Endothelial cell of umbilical vein (primary cell): ENCODE measurements at regions of chr3 and their contacts with region 1.

Region 1: DNA sequence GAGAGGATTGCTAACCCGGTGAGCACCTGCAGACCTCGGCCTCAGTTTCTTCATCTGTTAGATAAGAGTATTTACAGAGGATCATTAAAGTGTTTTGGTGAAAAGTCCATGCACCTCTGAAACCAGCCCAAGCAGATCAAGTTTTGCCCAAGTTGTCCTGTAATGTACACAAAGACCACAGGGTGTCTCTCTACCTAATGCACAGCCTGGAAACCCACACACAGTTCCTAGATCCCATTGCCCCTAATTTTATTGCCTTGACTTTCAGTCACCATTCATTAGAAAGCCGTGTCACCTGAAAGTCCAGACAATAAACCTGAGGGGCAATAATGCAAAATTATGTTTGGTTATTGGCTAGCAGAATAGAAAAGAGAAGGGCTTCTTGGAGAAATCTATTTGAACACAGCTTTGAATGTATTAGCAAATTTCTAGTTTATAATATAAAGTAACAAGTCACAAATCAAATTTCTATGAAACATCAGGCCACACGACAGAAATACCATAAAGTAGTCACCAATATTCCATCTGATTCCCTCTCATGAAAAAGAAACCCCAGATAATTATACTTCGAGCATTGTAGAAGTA is 161.3 kb upstream of the SLC2A2 start:
- DNase-seq: peak; percentile 67
- H3K4me3 ChIP-seq: no peak overlapping the region
- H3K27ac ChIP-seq: no peak overlapping the region
- H3K4me1 ChIP-seq: peaks cover 43% of the 10 kb centered on the region
- H3K27me3 ChIP-seq: no peaks in the 10 kb centered on the region
- CTCF ChIP-seq: peak; percentile 61 to 69
- POLR2A ChIP-seq: no peak

Region 2: DNA sequence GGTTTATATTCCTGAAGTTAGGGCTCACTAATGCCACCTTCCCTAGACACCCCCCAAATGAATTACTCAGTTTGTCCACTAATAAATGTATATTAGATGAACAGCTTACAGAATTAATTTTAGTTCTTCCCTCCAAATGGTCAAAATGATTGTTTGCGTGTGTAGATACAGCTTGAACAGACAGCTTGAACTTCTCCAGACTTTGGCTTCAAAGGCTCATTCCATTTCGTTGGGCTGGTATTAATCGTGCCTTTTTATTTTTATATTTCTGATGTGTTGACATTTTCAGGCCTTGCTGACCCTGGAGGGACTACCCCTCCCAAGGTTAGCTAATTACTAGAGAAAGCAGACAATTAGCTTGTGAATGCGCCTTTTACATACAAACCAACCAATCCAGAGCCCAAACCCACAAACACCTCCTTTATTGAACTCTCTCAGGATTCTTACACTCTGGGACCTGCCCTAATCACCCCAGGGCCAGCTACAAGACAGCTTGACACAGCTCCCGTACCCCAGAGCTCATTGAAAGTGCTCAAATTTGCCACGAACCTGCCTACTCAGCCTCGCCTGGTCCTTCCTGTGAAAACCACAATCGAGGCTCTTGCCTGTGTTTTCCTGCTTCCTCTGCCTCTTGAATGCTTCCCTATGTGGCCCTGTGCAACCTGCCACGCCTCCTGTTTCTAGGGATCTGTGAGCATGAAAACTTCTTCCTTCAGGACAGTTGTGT is 358.1 kb before region 1 on chr3:
- CTCF ChIA-PET with region 1: no interaction called
- POLR2A ChIA-PET with region 1: no interaction called
- dilution Hi-C with region 1: no loop called
- intact Hi-C with region 1: no loop called
- DNase-seq: no peak
- H3K4me3 ChIP-seq: no peak overlapping the region
- H3K27ac ChIP-seq: no peak overlapping the region
- H3K4me1 ChIP-seq: no peaks in the 10 kb centered on the region
- H3K27me3 ChIP-seq: peaks cover 19 to 24% of the 10 kb centered on the region in 2 experiments
- CTCF ChIP-seq: no peak
- POLR2A ChIP-seq: no peak

Region 3: DNA sequence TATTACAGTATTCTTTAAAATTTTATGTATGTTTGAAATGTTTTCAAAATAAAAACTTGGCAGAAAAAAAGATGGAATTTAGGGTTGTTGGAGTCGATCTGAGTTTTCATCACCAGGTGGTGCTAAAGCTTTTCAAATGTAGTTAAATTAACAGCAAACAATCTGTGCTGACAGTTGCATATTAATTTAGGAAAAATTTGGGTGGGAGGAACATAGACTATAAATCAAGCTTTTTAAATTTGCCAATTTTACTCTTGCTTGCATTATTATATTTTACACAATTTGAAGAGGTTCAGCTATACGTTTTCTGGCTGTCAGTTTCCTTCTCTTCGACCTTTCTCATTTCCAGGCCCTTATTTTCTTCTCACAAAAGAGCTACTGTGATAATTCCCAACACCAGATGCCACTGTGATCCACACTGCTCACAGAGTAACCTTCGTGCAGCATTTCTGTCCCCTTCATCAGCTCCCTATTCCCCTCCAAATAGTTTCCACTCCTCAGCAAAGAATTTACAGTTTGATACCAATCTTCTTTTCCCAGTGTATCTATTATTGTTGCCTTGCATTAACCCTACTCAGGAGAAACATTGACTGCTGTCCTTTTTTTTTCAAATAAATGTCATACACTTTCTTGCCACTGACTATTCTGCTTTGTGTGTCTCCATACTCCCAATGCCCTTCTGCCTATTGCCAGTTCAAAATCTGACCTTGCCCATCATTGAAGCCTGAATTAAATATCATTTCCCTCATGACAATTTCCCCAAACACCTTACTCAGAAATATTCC is 226.0 kb before region 1 on chr3:
- CTCF ChIA-PET with region 1: interaction called, 9 read pairs
- POLR2A ChIA-PET with region 1: no interaction called
- dilution Hi-C with region 1: no loop called
- intact Hi-C with region 1: loop called (anchors 2 kb)
- DNase-seq: peak; percentile 65
- H3K4me3 ChIP-seq: no peak overlapping the region
- H3K27ac ChIP-seq: no peak overlapping the region
- H3K4me1 ChIP-seq: no peaks in the 10 kb centered on the region
- H3K27me3 ChIP-seq: peaks cover 0 to 2% of the 10 kb centered on the region in 2 experiments
- CTCF ChIP-seq: peak; percentile 37 to 40
- POLR2A ChIP-seq: no peak

Region 4: GRCh38 chr3:171049861-171050444 is 137.8 kb before region 1 on chr3:
- CTCF ChIA-PET with region 1: no interaction called
- POLR2A ChIA-PET with region 1: no interaction called
- dilution Hi-C with region 1: no loop called
- intact Hi-C with region 1: loop called (anchors 1 kb)
- DNase-seq: peak; percentile 67
- H3K4me3 ChIP-seq: no peak overlapping the region
- H3K27ac ChIP-seq: no peak overlapping the region
- H3K4me1 ChIP-seq: no peaks in the 10 kb centered on the region
- H3K27me3 ChIP-seq: no peaks in the 10 kb centered on the region
- CTCF ChIP-seq: peak; percentile 58 to 63
- POLR2A ChIP-seq: no peak

Region 5: GRCh38 chr3:171157286-171157685 is 30.5 kb before region 1 on chr3:
- CTCF ChIA-PET with region 1: no interaction called
- POLR2A ChIA-PET with region 1: no interaction called
- dilution Hi-C with region 1: no loop called
- intact Hi-C with region 1: no loop called
- DNase-seq: no peak
- H3K4me3 ChIP-seq: no peak overlapping the region
- H3K27ac ChIP-seq: no peak overlapping the region
- H3K4me1 ChIP-seq: no peaks in the 10 kb centered on the region
- H3K27me3 ChIP-seq: no peaks in the 10 kb centered on the region
- CTCF ChIP-seq: no peak
- POLR2A ChIP-seq: no peak

Region 6: DNA sequence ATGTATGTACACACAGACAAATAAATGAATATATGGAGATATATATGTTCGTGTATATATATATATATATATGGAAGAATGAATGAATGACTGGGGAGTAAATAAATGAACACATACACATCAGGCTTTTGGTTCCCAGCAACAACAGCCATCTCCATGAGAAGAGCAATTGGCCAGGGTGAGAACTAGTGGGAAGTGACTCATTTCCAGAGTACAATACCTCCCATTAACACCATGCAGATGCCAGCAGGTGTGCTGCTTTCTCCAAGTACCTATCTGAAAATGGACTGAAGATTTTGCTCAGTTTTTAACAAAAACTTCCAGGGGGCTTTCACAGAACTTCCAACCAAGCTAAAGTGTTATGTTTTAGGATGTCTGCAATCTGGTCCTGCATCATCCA is 18.5 kb after region 1 on chr3:
- CTCF ChIA-PET with region 1: interaction called, 15 read pairs
- POLR2A ChIA-PET with region 1: interaction called, 6 read pairs
- dilution Hi-C with region 1: no loop called
- intact Hi-C with region 1: loop called (anchors 1 kb)
- DNase-seq: peak; percentile 74
- H3K4me3 ChIP-seq: no peak overlapping the region
- H3K27ac ChIP-seq: peak overlapping the region; percentile 91
- H3K4me1 ChIP-seq: peaks cover 39% of the 10 kb centered on the region
- H3K27me3 ChIP-seq: no peaks in the 10 kb centered on the region
- CTCF ChIP-seq: no peak
- POLR2A ChIP-seq: no peak

Region 7: DNA sequence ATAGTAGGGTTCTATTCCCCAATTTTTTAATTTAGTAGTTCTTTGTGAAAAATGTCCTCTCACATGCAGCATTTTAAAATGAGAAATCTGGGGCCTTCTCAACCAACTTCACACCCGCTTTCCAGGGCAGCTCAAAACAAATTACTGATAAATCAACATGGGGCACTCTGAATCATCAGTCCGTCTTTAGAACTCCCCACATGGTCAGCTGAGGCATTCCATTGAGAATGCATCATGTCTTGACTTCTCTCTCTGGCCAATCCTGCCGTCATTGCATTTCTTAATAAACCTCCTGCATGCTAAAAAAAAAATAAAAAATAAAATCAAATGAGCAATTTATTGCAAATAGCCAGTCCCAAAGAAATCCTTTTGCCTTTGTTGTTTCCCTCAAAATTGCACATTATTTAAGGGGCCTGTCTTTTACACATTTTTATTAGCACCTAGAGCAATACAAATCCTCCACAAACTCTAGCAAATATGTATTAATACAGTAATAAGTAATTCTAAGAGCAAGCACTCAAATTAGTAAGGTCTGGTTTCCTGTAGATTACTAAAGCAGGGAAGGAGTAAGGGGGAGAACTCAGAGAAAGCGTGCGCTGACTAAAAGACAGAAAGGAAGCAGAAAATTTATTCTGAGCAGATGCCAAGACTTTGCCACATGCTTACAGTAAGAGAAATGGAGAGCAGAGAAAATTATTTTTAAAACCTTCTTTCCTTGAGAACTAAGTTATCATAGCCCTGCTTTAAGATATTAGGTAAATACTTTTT is 96.7 kb after region 1 on chr3:
- CTCF ChIA-PET with region 1: interaction called, 3 read pairs
- POLR2A ChIA-PET with region 1: no interaction called
- dilution Hi-C with region 1: no loop called
- intact Hi-C with region 1: loop called (anchors 1 kb)
- DNase-seq: peak; percentile 95
- H3K4me3 ChIP-seq: no peak overlapping the region
- H3K27ac ChIP-seq: peak overlapping the region; percentile 96
- H3K4me1 ChIP-seq: peaks cover 45% of the 10 kb centered on the region
- H3K27me3 ChIP-seq: no peaks in the 10 kb centered on the region
- CTCF ChIP-seq: no peak
- POLR2A ChIP-seq: no peak

Region 8: DNA sequence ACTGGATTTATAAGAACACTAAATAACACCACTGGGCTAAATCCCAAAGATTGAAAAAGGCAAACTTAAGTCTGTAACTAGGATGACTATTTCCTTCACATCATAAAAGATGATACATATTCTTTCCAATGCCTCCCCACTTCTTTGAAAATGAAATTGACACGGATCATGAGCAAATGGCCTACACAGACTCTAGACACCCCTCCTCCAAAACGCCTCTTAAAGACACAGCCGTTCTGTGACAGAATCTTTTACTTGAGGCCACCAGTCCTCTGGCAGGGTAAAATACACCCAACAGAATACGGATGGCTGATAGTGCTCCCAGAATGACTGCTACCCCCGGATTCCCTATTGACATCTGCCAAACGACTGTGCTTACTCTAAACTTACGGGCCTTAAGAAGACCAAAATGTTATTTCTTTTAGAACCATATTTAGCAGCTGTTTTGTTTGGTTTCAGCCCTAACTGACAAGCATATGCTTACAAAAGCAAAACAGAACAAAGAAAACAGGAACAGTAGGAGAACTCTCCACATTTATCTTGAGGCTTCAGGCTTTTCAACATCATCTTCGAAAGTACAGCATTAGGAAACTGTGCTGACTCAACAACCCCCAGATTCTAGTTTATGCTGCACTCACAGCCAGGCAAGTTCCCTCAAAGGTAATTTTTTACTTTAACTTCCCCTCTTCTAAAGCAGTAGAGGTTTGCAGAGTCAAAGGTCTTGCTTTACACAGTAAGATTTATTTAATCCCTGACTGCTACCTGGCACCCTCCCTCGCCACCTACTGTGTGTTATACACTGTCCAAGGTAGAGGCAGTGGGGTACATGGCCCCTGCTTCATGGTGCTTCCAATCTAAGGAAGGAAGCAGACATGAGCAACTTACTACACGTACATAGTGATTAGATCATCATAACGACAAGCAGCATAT is 188.1 kb after region 1 on chr3:
- CTCF ChIA-PET with region 1: interaction called, 6 read pairs
- POLR2A ChIA-PET with region 1: no interaction called
- dilution Hi-C with region 1: no loop called
- intact Hi-C with region 1: loop called (anchors 1 kb)
- DNase-seq: peak; percentile 51
- H3K4me3 ChIP-seq: no peak overlapping the region
- H3K27ac ChIP-seq: peak overlapping the region; percentile 82
- H3K4me1 ChIP-seq: peaks cover 46% of the 10 kb centered on the region
- H3K27me3 ChIP-seq: no peaks in the 10 kb centered on the region
- CTCF ChIP-seq: no peak
- POLR2A ChIP-seq: no peak

Region 9: GRCh38 chr3:171566803-171567422 is 379.1 kb after region 1 on chr3:
- CTCF ChIA-PET with region 1: interaction called, 38 read pairs
- POLR2A ChIA-PET with region 1: no interaction called
- dilution Hi-C with region 1: no loop called
- intact Hi-C with region 1: loop called (anchors 1 kb)
- DNase-seq: peak; percentile 55
- H3K4me3 ChIP-seq: no peak overlapping the region
- H3K27ac ChIP-seq: no peak overlapping the region
- H3K4me1 ChIP-seq: peaks cover 8% of the 10 kb centered on the region
- H3K27me3 ChIP-seq: peaks cover 0 to 2% of the 10 kb centered on the region in 2 experiments
- CTCF ChIP-seq: peak; percentile 40 to 46
- POLR2A ChIP-seq: no peak